Activated CD8-positive, alpha-beta memory T cell treated with anti-CD3 and anti-CD28 coated beads, Interleukin-2, amount 10 ng/mL, durations not matched to agents 7 days and 5 days (primary cell): ENCODE measurements at regions of chr1 and their contacts with region 1.

Region 1: DNA sequence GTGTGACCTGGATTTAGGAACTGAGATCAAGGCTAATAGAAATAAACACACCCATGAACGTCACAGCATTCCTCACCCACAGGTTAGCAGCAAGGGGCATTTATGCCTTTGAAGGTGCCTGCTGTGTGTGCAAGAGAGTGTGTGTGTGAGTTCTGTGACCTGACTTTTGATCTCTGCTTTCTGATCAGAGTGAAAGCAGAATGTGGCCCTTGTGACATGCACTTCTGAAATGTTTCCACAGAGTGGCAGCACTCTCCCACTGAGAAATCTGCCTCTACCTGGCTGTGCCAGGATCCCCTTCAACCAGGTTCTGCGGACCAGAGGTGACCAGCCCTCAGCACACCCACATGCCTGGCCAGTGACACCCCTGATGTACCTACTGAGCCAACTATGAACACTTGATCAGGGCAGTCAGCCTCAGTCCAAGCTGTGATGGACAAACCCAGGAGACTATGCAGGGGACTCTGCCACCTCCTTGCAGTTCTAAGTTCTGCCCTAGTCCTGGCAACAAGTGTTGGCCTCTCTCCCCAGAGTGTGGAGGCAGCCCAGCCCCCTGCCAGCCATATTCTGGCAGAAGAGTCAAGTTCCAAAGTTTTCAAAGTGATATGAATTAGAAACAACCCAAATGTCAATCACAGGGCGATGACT is 41.0 kb downstream of the RXRG start:
- DNase-seq: peak; percentile 61
- ATAC-seq: peak; percentile 70
- H3K4me3 Mint-ChIP-seq: no peak overlapping the region
- H3K27ac Mint-ChIP-seq: no peak overlapping the region
- H3K4me1 Mint-ChIP-seq: peaks cover 2% of the 10 kb centered on the region
- H3K27me3 Mint-ChIP-seq: peaks cover 41% of the 10 kb centered on the region

Region 2: DNA sequence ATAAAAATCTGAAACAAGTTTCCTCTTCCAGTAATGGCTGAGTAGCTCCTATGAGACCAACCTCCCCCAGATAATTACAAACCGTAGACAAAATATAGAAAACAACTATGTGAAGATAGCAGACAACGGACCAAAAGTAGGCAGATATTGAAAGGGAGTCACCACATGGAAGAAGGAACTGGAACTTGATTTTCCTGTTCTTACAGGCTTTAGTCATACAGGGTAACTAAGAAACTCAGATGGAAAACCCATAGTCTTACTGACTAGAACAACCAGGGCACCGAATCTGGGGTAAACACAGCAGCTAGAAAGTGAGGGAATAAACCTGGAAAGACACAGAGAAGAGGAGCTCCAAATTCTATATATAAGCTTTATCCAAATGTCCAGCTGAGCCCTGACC is 73.5 kb before region 1 on chr1:
- CTCF ChIA-PET with region 1: no interaction called
- DNase-seq: no peak
- ATAC-seq: no peak
- H3K4me3 Mint-ChIP-seq: no peak overlapping the region
- H3K27ac Mint-ChIP-seq: no peak overlapping the region
- H3K4me1 Mint-ChIP-seq: no peaks in the 10 kb centered on the region
- H3K27me3 Mint-ChIP-seq: peaks cover 21% of the 10 kb centered on the region

Region 3: GRCh38 chr1:165597883-165598675 is 194.1 kb after region 1 on chr1:
- CTCF ChIA-PET with region 1: interaction called, 33 read pairs
- DNase-seq: peak; percentile 98
- ATAC-seq: peak; percentile 99
- H3K4me3 Mint-ChIP-seq: peak overlapping the region; percentile 84
- H3K27ac Mint-ChIP-seq: peak overlapping the region; percentile 86
- H3K4me1 Mint-ChIP-seq: peaks cover 34% of the 10 kb centered on the region
- H3K27me3 Mint-ChIP-seq: peaks cover 37% of the 10 kb centered on the region